MCF 10A (cell line): ENCODE measurements at regions of chr1 and their contacts with region 1.

Region 1: GRCh38 chr1:245485996-245486395 is 331.2 kb downstream of the KIF26B start:
- DNase-seq: no peak
- H3K4me3 Mint-ChIP-seq: no peak overlapping the region
- H3K27ac Mint-ChIP-seq: no peak overlapping the region
- H3K4me1 Mint-ChIP-seq: peaks cover 16% of the 10 kb centered on the region
- H3K27me3 Mint-ChIP-seq: no peaks in the 10 kb centered on the region
- CTCF ChIP-seq: no peak

Region 2: DNA sequence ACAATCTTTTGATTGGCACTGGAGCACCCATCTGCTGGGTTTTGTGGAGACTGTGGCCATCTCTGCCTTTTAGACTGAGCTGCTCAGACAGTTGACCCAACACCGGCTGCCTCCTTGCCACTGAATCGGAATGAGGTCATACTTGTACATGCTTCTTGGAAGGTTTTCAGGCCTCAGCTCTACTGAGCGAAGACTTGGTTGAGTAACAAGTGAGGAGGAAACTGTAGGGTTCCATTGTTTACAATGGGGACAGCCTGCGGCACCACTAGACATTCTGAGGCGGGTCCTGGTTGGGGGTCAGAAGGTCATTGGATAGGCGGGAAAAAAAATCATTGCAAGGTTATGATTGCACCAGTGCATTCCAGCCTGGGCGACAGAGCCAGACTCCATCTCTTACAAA is 10.8 kb before region 1 on chr1:
- CTCF ChIA-PET with region 1: interaction called, 3 read pairs
- POLR2A ChIA-PET with region 1: interaction called, 14 read pairs
- intact Hi-C with region 1: no loop called
- DNase-seq: peak; percentile 58
- H3K4me3 Mint-ChIP-seq: no peak overlapping the region
- H3K27ac Mint-ChIP-seq: no peak overlapping the region
- H3K4me1 Mint-ChIP-seq: peaks cover 6% of the 10 kb centered on the region
- H3K27me3 Mint-ChIP-seq: no peaks in the 10 kb centered on the region
- CTCF ChIP-seq: no peak

Region 3: DNA sequence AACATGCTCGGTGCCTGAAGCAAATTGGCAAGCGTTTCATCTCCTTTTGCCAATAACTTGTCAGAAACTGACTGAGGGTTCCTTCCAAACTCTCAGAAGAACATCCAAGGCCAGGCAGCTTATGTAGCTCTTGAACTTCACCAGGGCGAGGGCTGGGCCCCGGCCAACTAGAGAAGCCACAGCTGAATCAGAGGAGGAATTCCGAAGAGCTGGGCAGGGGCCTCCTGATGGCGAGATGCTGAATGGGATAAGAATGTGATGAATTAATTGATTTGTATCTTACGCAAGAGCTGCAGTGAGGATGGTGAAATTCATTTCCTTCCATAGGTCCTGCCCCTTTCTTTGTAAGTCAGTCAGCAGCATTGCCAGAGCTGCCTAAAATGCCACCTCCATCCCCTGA is 14.6 kb after region 1 on chr1:
- CTCF ChIA-PET with region 1: interaction called, 10 read pairs
- POLR2A ChIA-PET with region 1: interaction called, 41 read pairs
- intact Hi-C with region 1: no loop called
- DNase-seq: peak; percentile 99
- H3K4me3 Mint-ChIP-seq: no peak overlapping the region
- H3K27ac Mint-ChIP-seq: no peak overlapping the region
- H3K4me1 Mint-ChIP-seq: peaks cover 20% of the 10 kb centered on the region
- H3K27me3 Mint-ChIP-seq: peaks cover 24% of the 10 kb centered on the region
- CTCF ChIP-seq: peak; percentile 16